ENCODE measurements at regions of chr14 and their contacts with region 1.

Region 1: DNA sequence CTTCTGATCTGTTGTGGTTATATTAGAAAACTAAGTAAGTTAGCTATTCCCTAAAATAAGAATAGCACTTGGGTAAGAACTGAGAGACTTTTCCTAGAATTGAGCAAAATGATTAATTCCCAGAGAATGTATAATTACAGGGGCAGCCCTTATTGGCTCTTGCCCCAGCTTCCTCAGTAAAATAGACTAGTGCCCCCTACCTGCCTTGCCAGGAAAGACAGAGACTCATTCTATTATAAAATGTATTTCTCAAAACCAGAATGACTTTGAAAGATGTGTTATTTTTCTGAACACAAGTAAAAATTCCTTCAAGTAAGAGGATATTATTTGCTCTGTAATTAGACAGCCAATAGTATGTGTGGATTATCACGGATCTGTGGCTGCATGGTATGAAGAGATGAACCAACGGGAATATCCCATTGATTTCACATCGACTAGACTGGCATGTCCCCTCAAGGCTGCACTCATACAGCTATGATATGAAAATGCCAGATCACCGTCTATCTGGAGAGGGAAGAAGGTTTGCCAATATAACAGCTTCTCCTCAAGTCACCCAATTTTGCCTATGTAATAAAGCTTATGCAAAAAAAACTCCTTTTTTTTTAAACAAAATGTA is 7.4 kb upstream of the GLRX5 start:
- DNase-seq: no peak
- ATAC-seq: peak; percentile 64

Region 2: GRCh38 chr14:95442633-95443021 is 84.9 kb before region 1 on chr14:
- intact Hi-C with region 1: loop called (anchors 5 kb)
- DNase-seq: peak; percentile 89
- ATAC-seq: peak; percentile 97

Measured in Right ventricle myocardium superior (tissue), 1 donor.